Right lobe of liver (tissue), 6 donors: ENCODE measurements at regions of chr1 and their contacts with region 1.

Region 1: GRCh38 chr1:112466078-112466660 is 42.6 kb upstream of the WNT2B start:
- DNase-seq: peak; percentile 93 to 95 (median 95)
- ATAC-seq: peak; percentile 95 to 98 (median 97)
- H3K4me3 ChIP-seq: peak overlapping the region in 1 of 3 donors; percentile 14
- H3K27ac ChIP-seq: peak overlapping the region in 2 of 3 donors; percentile 21 to 44
- H3K4me1 ChIP-seq: no peaks in the 10 kb centered on the region
- H3K27me3 ChIP-seq: no peaks in the 10 kb centered on the region
- CTCF ChIP-seq: peak; percentile 83 to 88 (median 86)
- POLR2A ChIP-seq: no peak

Region 2: DNA sequence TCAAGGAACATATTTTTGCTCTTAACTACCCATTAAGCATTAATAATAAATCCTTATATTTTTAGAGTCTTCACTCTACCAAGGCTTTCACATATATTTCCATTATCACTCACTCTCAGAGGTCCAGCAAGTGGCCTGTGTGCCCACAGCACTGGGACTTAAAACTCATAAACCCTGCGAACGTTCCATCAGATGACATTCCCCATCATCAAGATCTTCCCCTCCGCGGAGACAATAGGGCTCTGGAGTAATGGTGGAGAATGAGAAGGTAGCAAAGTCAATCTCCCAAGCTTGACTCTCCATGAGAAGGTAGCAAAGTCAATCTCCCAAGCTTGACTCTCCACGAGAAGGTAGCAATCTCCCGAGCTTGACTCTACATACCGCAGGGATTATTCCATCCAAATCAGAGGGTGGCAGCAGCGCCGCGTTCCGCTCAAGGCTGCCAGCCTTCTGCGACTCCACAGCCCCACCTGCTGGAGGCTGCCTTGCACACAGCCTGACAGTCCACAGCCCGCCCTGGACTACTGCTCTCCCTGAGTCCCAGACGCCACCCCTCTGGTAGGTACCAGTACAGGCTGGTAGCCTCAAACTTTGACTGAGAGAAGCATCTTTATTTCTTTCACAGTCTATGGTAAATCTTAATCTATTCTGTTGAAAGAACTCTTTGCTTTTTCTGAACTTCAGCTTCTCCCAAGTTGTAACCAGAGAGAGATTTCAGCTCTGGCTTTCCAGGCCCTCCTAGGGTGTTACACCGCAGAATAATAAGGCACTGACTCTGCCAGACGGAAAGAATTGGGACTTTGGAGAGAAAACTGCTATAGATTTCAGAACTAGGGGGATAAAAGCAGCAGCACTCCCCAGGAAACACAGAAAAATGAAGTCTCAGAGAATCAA is 96.5 kb before region 1 on chr1:
- intact Hi-C with region 1: loop called in 1 of 2 experiments (anchors 5 kb)
- DNase-seq: peak; percentile 86 to 90 (median 87)
- ATAC-seq: peak; percentile 100
- H3K4me3 ChIP-seq: no peak overlapping the region
- H3K27ac ChIP-seq: no peak overlapping the region
- H3K4me1 ChIP-seq: no peaks in the 10 kb centered on the region
- H3K27me3 ChIP-seq: no peaks in the 10 kb centered on the region
- CTCF ChIP-seq: peak; percentile 93 to 99 (median 98)
- POLR2A ChIP-seq: no peak

Region 3: GRCh38 chr1:112579801-112580510 is 113.8 kb after region 1 on chr1:
- intact Hi-C with region 1: no loop called
- DNase-seq: no peak
- ATAC-seq: no peak
- H3K4me3 ChIP-seq: no peak overlapping the region
- H3K27ac ChIP-seq: no peak overlapping the region
- H3K4me1 ChIP-seq: no peaks in the 10 kb centered on the region
- H3K27me3 ChIP-seq: no peaks in the 10 kb centered on the region
- CTCF ChIP-seq: no peak
- POLR2A ChIP-seq: no peak

Region 4: DNA sequence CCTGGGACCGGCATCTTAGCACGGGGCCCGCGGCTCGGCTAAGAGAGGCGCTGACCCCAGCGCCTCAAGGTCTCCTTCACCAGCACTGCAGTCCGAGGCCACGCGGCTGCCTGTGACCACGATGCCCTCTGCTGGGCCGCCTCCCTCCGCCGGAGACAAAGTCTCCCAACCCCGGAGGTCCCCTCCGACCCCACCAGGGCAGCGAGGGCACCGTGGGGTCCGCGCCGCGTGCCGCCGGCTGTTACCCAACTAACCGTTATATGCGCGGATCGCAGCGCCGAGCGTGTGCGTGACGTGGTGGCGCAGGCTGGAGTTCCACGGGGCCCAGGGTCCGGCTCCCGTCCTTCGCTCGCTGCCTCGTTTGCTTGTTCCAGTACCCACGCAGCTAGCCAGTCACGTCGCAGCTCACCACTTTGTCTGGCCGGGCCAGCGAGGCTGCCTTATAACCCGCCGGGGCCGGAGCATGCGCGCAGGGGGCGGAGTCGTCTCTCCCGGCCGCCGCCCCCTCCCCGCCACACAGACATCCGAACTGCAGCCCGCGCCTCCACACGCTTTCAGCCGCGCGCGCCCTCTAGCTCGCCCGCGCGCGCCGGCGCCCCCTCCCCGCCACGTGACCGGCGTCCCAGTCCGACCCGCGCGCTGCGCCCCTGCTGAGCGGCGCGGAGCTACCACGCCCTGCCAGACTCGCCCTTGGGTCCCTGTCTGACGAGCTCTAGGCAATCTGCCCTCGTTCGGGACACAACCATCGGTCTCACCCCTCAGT is 489.8 kb after region 1 on chr1 and contains the start of gene SLC16A1:
- intact Hi-C with region 1: no loop called
- DNase-seq: peak; percentile 95 to 96 (median 96)
- ATAC-seq: peak; percentile 90 to 96 (median 93)
- H3K4me3 ChIP-seq: peak within 1 kb of the TSS; percentile 73 to 86 (median 86)
- H3K27ac ChIP-seq: peak within 1 kb of the TSS; percentile 82 to 91 (median 87)
- H3K4me1 ChIP-seq: peaks cover 0 to 15% (median 0%) of the 10 kb centered on the region in 4 donors
- H3K27me3 ChIP-seq: no peaks in the 10 kb centered on the region
- CTCF ChIP-seq: peak; percentile 27 to 39 (median 30)
- POLR2A ChIP-seq: peak; percentile 99
- total RNA-seq, gene SLC16A1: 26.1 to 81.9 (median 55.2) TPM